Right ventricle myocardium inferior (tissue), 1 donor: ENCODE measurements at regions of chr11 and their contacts with region 1.

Region 1: DNA sequence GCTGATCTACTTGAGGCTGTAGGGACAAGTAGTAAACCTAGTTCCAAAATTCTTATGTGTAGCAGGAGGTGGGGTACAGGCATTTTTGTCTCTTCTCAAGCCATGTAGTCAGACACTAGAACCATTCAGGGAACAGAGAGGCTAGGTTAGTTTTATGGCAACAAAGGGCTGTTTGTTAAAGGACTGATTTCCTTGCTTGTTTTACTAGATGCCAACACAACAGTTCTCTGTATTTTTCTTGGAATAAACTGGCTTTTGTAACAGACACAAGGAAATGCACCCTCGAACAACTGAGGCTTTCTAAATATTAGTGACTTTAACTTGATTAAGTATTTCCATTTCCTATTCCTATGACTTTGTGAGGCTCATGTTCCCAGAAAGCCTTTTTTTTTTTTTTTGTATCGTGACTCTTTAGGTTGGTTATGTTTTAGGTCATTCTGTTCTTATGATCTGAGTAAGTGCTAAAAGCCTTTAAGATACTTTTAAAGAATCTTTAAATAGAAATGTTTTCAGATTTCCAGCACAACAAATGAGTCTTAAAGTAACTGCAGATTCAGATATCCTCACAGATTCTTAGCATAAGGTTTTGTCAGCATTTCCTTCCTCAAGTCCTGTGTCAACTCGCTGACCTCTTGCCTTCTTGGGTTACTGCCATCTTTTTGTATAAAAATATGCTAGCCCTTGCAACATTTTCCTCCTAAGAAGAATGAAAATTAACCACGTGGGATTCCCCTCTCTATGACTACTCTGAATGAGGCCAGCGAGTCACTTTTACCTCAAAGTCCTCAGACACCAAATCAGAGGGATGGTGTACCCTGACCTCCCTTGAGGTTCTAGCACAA is 92.5 kb downstream of the CCDC83 start:
- DNase-seq: no peak
- ATAC-seq: peak; percentile 73

Region 2: DNA sequence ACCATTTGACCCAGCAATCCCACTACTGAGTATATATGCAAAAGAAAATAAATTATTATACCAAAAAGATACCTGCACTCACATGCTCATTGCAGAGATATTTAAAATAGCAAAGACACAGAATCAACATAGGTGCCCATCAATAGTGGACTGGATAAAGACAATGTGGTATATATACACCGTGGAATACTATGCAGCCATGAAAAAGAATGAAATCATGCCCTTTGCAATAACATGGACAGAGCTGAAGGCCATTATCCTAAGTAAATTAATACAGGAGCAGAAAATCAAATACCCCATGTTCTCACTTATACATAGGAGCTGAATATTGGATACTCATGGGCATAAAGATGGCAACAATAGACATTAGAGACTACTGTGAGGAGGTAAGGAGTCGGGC is 389.2 kb before region 1 on chr11:
- intact Hi-C with region 1: no loop called
- DNase-seq: no peak
- ATAC-seq: no peak

Region 3: GRCh38 chr11:86202013-86202336 is 254.3 kb after region 1 on chr11:
- intact Hi-C with region 1: loop called (anchors 5 kb)
- DNase-seq: no peak
- ATAC-seq: peak; percentile 45